ENCODE measurements at regions of chr2 and their contacts with region 1.

Region 1: DNA sequence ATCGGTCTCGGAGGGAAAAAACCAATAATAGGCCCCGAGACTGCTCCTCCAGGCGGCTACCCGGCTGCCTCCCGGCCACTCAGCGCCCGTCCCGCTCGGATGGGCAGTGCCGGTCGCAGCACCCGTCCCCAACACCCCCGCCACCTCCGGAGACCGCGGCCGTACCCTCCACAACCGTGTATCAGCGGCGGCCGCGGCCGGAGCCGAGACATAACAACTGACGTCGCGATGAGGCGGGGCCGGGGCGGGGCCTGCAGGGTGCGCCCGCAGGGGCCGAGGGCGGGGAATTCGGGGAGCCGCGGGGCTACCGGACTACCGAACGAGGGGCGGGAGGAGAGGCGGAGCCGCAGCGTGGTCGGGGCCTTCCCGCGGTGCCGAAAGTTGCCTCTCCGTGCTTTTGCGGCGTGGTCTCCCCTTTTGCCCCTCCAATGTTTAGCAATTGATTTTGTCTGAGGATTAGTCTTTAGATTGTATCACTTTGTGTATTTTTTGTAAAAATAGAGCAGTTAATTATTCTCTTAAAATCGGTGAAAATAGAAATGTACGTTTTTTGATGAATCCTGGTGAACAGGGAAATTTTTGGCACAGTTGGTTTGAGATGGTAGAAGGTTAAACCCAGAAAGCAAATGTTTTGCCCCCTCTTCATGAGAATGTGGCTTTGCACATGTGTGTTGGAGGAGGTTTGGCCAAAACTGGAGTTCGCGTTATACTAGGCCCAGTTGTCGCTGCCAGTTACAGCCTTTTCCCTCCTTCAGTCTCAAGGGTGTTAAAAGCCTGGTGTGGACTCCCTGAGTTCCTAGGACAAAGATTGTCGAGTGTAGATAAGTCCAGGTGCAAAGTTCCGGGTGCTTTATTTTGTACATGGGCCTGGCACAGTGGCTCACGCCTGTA is at the start of gene RNF103:
- DNase-seq: peak; percentile 92
- H3K4me3 ChIP-seq: peak within 1 kb of the TSS; percentile 74 to 98 (median 78)
- H3K27ac ChIP-seq: peak within 1 kb of the TSS; percentile 94
- H3K4me1 ChIP-seq: peaks cover 15% of the 10 kb centered on the region
- H3K27me3 ChIP-seq: no peaks in the 10 kb centered on the region
- CTCF ChIP-seq: no peak
- POLR2A ChIP-seq: peak; percentile 94
- total RNA-seq, gene RNF103: 24.2 and 27.2 TPM in 2 replicates

Region 2: DNA sequence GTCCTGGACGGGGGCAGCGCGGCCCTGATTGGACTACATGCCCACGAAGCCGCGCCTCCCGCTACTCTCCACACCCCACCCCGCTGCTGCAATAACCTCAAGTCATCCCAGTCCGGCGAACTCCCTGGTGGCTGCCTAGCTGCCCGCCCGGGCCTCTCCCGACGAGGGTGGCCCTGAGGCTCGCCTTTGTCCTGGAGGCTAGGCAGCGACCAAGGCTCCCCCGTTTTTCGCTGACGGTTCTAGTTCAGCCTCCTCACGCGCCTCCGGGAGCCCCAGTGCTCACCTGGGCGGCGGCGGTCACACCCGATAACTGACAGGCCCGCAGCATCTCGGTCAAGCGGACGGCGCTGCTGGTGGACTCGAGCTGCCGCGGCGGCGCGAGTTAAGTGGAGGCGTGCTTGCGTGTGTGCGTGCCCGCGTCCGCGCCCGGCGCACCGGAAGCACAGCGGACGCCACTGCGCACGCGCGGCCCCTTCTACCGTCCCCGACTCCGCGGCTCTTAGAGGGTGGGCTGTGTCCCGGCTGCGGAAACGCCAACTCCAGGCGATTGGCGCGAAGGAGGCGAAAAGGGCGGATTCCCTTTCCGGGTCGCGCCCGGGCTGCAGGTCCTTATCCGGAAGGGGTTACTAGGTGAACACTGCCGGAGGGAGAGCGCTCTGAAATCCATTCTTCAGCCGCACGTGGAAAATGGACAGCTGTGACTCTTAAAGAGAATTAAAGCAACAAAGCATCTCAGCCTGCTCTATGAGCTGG is 428.7 kb before region 1 on chr2 and contains the start of gene IMMT:
- CTCF ChIA-PET with region 1: no interaction called
- POLR2A ChIA-PET with region 1: no interaction called
- dilution Hi-C with region 1: no loop called
- intact Hi-C with region 1: loop called (anchors 5 kb)
- DNase-seq: peak; percentile 98
- H3K4me3 ChIP-seq: peak within 1 kb of the TSS; percentile 61 to 92 (median 81)
- H3K27ac ChIP-seq: peak within 1 kb of the TSS; percentile 92
- H3K4me1 ChIP-seq: peaks cover 16% of the 10 kb centered on the region
- H3K27me3 ChIP-seq: no peaks in the 10 kb centered on the region
- CTCF ChIP-seq: no peak
- POLR2A ChIP-seq: peak; percentile 89
- total RNA-seq, gene IMMT: 112 and 114 TPM in 2 replicates

Region 3: DNA sequence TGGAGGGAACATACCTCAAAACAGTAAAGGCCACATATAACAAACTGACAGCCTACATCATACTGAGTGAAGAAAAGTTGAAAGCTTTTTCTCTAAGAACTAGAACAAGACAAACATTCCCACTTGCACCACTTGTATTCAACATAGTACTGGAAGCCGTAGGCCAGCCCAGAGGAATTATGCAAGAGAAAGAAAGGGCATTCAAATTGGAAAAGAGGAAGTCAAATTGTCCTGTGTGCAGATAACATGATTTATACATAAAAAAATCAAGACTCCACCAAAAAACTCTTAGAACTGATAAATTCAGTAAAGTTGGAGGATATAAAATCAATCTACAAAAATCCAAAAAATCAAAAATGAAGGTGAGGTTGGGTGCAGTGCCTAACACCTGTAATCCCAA is 190.8 kb before region 1 on chr2:
- CTCF ChIA-PET with region 1: no interaction called
- POLR2A ChIA-PET with region 1: no interaction called
- dilution Hi-C with region 1: no loop called
- intact Hi-C with region 1: no loop called
- DNase-seq: no peak
- H3K4me3 ChIP-seq: no peak overlapping the region
- H3K27ac ChIP-seq: no peak overlapping the region
- H3K4me1 ChIP-seq: no peaks in the 10 kb centered on the region
- H3K27me3 ChIP-seq: peaks cover 5 to 22% of the 10 kb centered on the region in 2 experiments
- CTCF ChIP-seq: no peak
- POLR2A ChIP-seq: no peak

Region 4: DNA sequence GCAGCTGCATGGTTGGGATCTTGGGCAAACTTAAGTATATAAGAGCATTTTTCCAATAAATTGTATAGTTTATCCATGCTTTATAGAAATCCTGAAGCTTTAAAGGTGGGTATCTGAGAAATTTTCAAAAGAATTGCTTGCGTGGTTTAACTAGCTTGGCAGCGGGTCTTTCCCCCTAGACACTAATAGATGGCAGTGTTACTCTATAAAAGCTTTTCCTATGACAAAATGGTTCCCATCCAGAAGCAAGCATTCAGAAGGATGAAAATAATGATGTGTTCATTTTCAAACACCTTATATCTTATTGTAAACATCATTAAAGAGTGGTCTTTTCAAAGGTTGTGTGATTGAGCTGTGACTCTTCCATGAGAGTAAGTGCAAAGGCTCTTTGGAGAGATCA is 136.8 kb before region 1 on chr2:
- CTCF ChIA-PET with region 1: interaction called, 4 read pairs
- POLR2A ChIA-PET with region 1: no interaction called
- dilution Hi-C with region 1: no loop called
- intact Hi-C with region 1: loop called (anchors 5 kb)
- DNase-seq: no peak
- H3K4me3 ChIP-seq: no peak overlapping the region
- H3K27ac ChIP-seq: no peak overlapping the region
- H3K4me1 ChIP-seq: no peaks in the 10 kb centered on the region
- H3K27me3 ChIP-seq: no peaks in the 10 kb centered on the region
- CTCF ChIP-seq: no peak
- POLR2A ChIP-seq: no peak

Region 5: DNA sequence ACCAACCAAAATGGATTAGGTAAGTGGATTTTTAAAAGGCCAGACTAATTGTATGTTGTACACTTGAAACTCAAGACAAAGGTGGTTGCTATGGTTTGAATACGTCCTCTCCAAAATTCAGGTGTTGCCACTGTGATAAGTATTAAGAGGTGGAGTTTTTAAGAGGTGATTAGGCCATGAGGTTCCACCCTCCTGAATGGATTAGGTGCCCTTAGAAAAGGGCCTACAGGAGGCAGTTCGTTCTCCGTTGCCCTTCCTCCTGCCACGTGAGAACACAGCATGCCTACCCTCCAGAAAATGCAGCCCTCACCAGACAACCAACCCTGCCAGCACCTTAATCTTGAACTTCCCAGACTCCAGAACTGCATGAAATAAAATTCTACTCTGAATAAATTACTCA is 111.9 kb before region 1 on chr2:
- CTCF ChIA-PET with region 1: no interaction called
- POLR2A ChIA-PET with region 1: no interaction called
- dilution Hi-C with region 1: no loop called
- intact Hi-C with region 1: no loop called
- DNase-seq: no peak
- H3K4me3 ChIP-seq: no peak overlapping the region
- H3K27ac ChIP-seq: no peak overlapping the region
- H3K4me1 ChIP-seq: no peaks in the 10 kb centered on the region
- H3K27me3 ChIP-seq: no peaks in the 10 kb centered on the region
- CTCF ChIP-seq: no peak
- POLR2A ChIP-seq: no peak

Region 6: GRCh38 chr2:86562922-86563649 is 60.8 kb before region 1 on chr2 and contains the start of gene CHMP3:
- CTCF ChIA-PET with region 1: interaction called, 4 read pairs
- POLR2A ChIA-PET with region 1: interaction called, 4 read pairs
- dilution Hi-C with region 1: no loop called
- intact Hi-C with region 1: loop called (anchors 1 kb)
- DNase-seq: peak; percentile 98
- H3K4me3 ChIP-seq: peak within 1 kb of the TSS; percentile 76 to 96 (median 78)
- H3K27ac ChIP-seq: peak within 1 kb of the TSS; percentile 97
- H3K4me1 ChIP-seq: peaks cover 6% of the 10 kb centered on the region
- H3K27me3 ChIP-seq: no peaks in the 10 kb centered on the region
- CTCF ChIP-seq: no peak
- POLR2A ChIP-seq: peak; percentile 84
- total RNA-seq, gene CHMP3: 86.3 and 92.2 TPM in 2 replicates

Region 7: DNA sequence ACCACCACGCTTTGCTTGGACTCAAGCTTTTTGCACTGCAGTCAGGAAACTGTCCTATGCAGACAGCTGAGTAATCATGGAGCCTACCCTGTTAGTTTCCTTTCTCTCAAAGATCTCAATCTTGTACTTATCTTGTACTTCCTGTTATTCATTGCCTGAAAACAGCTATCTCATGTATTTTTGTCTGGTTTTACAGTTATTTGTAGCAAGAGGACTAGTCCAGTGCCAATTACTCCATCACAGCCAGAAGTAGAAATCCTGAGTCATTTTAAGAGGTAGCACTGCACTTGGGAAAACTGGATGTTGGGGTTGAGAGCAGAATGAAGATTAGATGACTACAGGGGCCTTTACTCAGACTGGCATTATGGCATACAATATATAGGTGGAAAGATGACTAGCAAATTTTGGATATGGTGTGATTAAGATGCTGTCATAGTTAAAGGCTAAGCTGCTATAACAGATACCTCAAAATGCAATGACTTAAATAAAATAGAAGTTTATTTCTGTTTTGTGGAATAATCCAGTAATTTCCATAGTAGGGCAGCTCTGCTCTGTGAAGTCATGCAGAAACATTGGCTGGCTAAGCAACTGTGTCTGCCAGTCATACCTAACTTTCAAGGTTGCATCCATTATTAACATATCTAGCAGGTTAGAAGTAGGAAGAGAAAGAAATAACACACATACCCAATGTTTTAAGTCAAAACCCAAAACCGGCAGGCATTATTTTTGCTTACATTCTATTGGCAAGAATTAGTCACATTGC is 39.6 kb before region 1 on chr2:
- CTCF ChIA-PET with region 1: no interaction called
- POLR2A ChIA-PET with region 1: interaction called, 7 read pairs
- dilution Hi-C with region 1: no loop called
- intact Hi-C with region 1: loop called (anchors 2 kb)
- DNase-seq: peak; percentile 94
- H3K4me3 ChIP-seq: no peak overlapping the region
- H3K27ac ChIP-seq: peak overlapping the region; percentile 94
- H3K4me1 ChIP-seq: peaks cover 20% of the 10 kb centered on the region
- H3K27me3 ChIP-seq: no peaks in the 10 kb centered on the region
- CTCF ChIP-seq: no peak
- POLR2A ChIP-seq: peak; percentile 22

Measured in endothelial cell of umbilical vein (primary cell).